Ovary (tissue), 10 donors: ENCODE measurements at regions of chr2 and their contacts with region 1.

Region 1: DNA sequence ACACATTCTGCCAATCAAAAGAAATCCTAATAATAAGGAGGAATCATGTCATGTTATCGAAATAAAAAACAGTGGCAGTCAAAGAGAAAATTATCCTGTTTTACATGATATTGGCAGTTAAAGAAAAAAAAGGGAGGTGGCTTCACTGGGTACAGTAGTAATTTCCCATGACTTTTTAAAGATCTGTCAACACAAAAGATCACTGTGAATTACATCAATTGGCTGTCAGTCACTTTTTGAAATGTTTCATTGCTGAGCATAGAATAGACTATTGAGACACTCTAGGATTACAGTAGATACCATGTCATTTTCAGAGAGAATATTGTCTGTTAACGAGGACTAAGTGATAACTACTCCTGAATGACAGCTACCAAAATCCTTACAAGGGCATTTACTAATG is 335.7 kb upstream of the CYP26B1 start:
- DNase-seq: no peak
- H3K4me3 ChIP-seq: no peak overlapping the region
- H3K27ac ChIP-seq: no peak overlapping the region
- H3K4me1 ChIP-seq: no peaks in the 10 kb centered on the region
- H3K27me3 ChIP-seq: no peaks in the 10 kb centered on the region
- CTCF ChIP-seq: no peak
- EP300 ChIP-seq: no peak
- POLR2A ChIP-seq: no peak

Region 2: DNA sequence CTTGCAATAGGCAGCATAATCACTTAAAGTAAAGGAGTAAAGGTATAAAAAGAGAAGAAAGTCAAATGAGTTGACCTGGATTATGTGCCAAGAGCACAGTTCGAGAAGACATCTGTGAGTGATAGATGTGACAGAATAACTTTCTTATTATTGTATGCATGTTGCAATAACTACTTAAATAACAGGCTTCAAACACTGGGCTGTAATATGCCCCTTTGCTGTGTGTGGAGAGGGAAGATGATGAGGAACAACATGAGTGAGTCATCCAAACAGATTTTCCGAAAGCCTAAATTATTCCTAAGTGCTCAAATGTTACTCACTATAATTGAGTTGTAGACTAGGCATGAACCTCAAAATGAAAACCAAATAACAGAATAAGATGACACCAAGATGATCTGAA is 14.4 kb after region 1 on chr2:
- intact Hi-C with region 1: loop called in 1 of 4 experiments (anchors 1 kb)
- DNase-seq: no peak
- H3K4me3 ChIP-seq: no peak overlapping the region
- H3K27ac ChIP-seq: no peak overlapping the region
- H3K4me1 ChIP-seq: no peaks in the 10 kb centered on the region
- H3K27me3 ChIP-seq: no peaks in the 10 kb centered on the region
- CTCF ChIP-seq: no peak
- EP300 ChIP-seq: no peak
- POLR2A ChIP-seq: no peak